ENCODE measurements at regions of chr19 and their contacts with region 1.

Region 1: GRCh38 chr19:19361075-19361594 is 40.5 kb downstream of the MAU2 start:
- DNase-seq: peak in 34 of 35 experiments; percentile 14 to 86 (median 52)
- ATAC-seq: peak; percentile 51 to 63 (median 58)
- H3K4me3 ChIP-seq: no peak overlapping the region
- H3K4me3 Mint-ChIP-seq: peak overlapping the region; percentile 44 to 47 (median 46)
- H3K27ac ChIP-seq: peak overlapping the region; percentile 6
- H3K27ac Mint-ChIP-seq: peak overlapping the region; percentile 28 to 72
- H3K4me1 ChIP-seq: peaks cover 6 to 40% of the 10 kb centered on the region in 2 experiments
- H3K4me1 Mint-ChIP-seq: peaks cover 35 to 40% (median 40%) of the 10 kb centered on the region in 3 donors
- H3K27me3 ChIP-seq: no peaks in the 10 kb centered on the region
- H3K27me3 Mint-ChIP-seq: no peaks in the 10 kb centered on the region

Region 2: DNA sequence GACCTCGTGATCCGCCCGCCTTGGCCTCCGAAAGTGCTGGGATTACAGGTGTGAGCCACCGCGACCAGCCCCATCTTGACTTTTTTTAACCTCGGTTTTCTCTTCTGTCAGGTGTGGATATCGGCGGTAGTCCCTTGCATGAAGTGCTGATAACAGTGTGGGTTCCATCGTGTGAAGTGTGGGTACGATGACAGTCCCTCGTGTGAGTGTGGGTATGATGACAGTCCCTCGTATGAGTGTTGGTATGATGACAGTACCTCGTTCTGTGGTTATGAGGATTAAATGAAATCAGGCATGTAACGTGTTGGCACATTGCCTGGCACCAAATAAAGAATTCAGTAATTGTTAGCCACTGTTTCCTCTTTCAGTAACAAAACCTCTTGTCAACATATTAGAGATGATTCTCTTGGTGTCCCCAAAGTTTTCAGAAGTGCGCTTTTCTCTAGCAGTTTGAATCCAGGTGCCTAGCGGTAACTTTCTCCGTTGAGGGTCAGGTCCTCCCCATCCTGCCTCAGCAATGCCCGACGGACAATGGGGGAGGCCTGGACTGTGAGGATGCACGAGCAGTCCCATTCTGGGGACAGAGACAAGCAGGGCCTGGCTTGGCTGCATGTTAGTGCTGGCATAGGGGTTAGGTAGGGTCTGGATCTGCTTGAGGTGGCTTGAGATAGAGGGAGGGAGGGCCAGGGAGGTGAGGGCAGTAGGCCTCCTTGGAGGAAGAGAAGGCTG is 59.6 kb after region 1 on chr19:
- CTCF ChIA-PET with region 1: interaction called in 1 of 2 experiments, 11 read pairs
- POLR2A ChIA-PET with region 1: no interaction called
- DNase-seq: peak in 30 of 35 experiments; percentile 13 to 82 (median 44)
- ATAC-seq: peak in 3 of 4 experiments; percentile 42 to 81 (median 74)
- H3K4me3 ChIP-seq: no peak overlapping the region
- H3K4me3 Mint-ChIP-seq: peak overlapping the region; percentile 14 to 45 (median 26)
- H3K27ac ChIP-seq: peak overlapping the region; percentile 66
- H3K27ac Mint-ChIP-seq: peak overlapping the region; percentile 66 to 74
- H3K4me1 ChIP-seq: peaks cover 10 to 93% of the 10 kb centered on the region in 2 experiments
- H3K4me1 Mint-ChIP-seq: peaks cover 76 to 89% (median 86%) of the 10 kb centered on the region in 3 donors
- H3K27me3 ChIP-seq: no peaks in the 10 kb centered on the region
- H3K27me3 Mint-ChIP-seq: no peaks in the 10 kb centered on the region

Measured in T-cell (primary cell).